Right ventricle myocardium inferior (tissue), 1 donor: ENCODE measurements at regions of chrX and their contacts with region 1.

Region 1: DNA sequence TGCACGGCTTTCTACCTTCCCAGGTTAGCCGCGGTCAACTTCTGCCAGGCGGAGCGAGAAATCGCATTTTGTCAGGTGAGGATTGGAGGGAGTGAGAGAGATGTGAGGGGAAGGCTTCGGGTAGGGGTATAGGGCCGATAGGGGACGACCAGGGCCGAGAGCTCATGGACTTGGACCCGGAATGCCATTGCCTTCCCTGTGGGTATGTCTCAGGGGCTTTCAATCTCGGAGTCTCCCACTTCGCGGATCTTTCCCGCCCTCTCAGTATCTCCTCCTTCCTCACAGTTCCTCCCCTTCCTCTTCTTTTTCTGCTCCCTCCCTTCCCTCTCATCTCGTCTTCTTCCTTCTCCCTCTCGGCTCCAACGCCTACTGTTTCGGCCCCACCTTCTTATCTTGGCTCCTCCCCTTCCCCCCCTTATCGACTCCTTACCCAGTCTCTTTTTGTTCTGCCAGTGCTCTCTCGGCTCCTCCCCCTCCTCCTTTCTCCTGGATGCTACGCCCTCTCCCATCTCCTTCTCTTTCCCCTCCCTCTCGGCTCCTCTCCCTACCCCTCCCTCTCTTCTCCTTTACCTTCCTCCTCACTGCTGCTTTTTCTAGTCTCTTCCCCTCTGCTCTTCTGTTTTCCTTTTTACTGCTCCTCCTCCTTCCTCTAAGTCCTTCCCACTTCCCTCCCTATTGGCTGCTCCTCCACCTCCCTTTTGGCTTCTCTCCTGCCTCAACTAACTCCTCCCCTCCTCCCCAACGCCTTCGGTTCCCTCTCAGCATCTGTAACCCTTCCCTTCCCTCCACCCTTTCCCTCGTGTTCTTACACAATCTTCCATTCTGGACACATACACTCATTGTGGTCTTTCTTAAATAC is 29.4 kb upstream of the RBMX start:
- DNase-seq: peak; percentile 80
- ATAC-seq: peak; percentile 87

Region 2: DNA sequence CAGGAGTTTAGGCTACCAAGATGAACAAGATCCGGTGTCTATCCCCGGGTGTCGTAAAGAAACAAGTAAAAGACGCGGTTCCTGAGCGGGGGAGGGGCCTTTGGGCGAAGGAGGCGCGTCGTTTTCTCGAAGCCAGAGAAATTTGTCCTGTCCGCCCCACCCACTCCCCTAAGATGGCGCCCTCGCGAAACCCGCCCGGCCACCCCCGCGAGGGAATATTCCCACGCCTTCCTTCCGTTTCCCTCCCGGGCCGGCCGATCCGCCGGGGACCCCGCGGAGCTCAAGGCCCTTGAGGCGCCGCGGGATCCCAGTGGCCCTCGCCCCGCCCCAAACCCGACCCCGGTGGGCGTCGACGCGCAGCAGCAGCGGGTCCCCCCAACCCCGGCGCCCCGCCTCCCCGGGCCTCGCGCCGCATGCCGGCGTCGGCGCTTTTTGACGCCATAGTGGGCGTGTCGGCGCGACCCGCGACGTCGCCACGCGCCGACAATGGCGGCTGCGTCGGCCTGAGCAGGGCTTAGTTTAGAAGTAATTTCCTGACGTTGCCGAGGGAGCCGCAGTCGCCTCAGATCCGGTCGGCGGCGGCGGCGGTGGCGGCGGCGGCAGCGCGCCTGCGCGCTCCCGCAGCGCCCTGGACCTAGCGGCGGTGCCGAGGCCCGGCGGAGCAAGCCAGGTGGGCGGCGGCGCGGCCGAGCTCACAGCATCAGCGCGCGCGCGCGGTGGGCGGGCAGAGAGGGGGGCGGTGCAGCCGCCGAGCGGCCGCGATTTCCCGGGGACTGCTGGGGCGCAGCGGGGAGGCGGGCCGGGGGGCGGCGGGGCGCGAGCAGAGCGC is 413.0 kb before region 1 on chrX and contains the start of gene HTATSF1:
- intact Hi-C with region 1: no loop called
- DNase-seq: peak; percentile 90
- ATAC-seq: peak; percentile 93
- total RNA-seq, gene HTATSF1: 57.3 TPM

Region 3: GRCh38 chrX:136880452-136881013 is 29.4 kb before region 1 on chrX and contains the start of gene RBMX:
- intact Hi-C with region 1: loop called (anchors 2 kb)
- DNase-seq: peak; percentile 89
- ATAC-seq: peak; percentile 96
- total RNA-seq, gene RBMX: 73.5 TPM